ENCODE measurements at regions of chr1 and their contacts with region 1.

Region 1: GRCh38 chr1:10867138-10867721 is 70.8 kb upstream of the CASZ1 start:
- DNase-seq: peak; percentile 83
- ATAC-seq: peak; percentile 64

Region 2: DNA sequence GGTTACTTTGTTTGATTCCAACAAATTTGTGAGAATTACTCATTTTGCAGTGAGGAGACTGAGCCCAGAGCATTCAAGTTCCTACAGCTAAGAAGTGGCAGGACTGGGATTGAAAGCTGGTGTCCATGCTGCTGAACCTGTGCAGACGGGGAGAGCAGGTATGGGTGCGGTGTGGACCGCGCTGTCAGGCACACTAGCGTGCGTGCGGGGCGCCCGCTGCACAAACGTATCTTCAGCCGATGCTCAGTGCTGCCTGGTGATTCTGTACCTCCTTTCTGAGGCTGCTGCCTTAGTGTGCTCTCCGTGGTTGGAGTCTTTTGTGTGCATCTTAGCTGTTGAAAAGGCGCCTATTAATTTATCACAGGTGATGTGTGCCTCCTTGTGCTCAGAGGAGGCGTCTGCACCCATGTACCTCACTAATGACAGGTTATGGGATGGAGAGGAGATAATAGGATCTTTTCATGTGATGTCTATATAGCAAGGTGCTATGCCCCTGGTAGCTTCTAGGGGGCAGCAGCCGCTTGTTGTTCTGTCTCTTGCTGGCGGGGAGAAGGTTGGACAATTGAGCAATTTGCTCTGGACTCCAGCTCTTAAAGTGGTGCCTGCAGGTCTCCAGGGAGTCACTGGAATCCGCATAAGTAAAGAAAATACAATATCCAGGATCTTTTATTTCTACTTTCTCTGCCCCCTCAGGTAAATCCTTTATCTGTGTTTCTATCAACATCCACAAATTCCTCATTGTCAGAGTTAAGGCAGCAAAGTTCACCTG is 359.9 kb before region 1 on chr1:
- intact Hi-C with region 1: loop called (anchors 2 kb)
- DNase-seq: peak; percentile 75
- ATAC-seq: peak; percentile 84

Region 3: GRCh38 chr1:10514490-10515235 is 352.6 kb before region 1 on chr1:
- intact Hi-C with region 1: loop called (anchors 2 kb)
- DNase-seq: no peak
- ATAC-seq: no peak

Region 4: GRCh38 chr1:10694633-10695627 is 172.3 kb before region 1 on chr1:
- intact Hi-C with region 1: loop called (anchors 5 kb)
- DNase-seq: peak; percentile 95
- ATAC-seq: peak; percentile 84

Region 5: GRCh38 chr1:10714337-10715114 is 152.7 kb before region 1 on chr1:
- intact Hi-C with region 1: loop called (anchors 5 kb)
- DNase-seq: peak; percentile 75
- ATAC-seq: peak; percentile 73